ENCODE measurements at regions of chr18 and their contacts with region 1.

Region 1: DNA sequence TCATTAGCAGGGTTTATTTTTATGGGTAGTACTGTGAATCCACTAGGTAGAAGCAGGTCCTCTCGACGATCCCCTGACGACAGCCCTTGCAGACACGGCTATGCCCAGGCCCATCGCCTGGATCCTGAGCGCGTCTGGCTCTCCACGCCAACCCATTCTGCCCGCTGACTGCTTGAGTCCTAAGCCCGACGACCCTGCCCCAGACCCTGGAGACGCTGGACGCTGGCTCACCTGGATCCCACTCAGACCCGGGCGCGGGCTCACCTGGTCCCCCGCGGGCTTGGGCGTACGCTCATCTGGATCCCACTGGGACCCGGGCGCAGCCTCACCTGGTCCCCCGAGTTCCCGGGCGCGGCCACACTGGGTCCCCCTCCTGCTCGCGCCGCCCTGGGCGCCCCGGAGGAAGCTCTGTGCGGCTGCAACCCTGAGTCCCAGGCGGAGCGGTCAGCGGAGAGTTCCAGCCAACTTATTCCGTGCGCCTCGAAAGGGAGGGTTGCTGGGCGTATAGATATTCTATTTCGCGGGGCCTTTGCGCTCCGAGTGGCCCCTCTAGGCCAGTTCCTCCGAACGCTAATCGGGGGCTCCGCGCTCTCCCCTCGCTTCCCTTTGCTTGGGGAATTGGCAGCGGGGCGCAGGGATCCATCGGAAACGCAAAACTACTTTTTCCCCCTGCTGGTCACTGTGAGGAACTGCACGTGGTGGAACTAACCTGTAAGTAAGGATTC is 22.4 kb upstream of the RMP24 start:
- DNase-seq: peak; percentile 59
- ATAC-seq: peak; percentile 97
- H3K4me3 ChIP-seq: peak overlapping the region; percentile 58
- H3K27ac ChIP-seq: no peak overlapping the region
- H3K4me1 ChIP-seq: peaks cover 1% of the 10 kb centered on the region; the same call in 1 of the 2 replicates
- H3K27me3 ChIP-seq: peaks cover 13% of the 10 kb centered on the region
- CTCF ChIP-seq: peak; percentile 72
- POLR2A ChIP-seq: no peak
- RAD21 ChIP-seq: peak; percentile 58

Region 2: DNA sequence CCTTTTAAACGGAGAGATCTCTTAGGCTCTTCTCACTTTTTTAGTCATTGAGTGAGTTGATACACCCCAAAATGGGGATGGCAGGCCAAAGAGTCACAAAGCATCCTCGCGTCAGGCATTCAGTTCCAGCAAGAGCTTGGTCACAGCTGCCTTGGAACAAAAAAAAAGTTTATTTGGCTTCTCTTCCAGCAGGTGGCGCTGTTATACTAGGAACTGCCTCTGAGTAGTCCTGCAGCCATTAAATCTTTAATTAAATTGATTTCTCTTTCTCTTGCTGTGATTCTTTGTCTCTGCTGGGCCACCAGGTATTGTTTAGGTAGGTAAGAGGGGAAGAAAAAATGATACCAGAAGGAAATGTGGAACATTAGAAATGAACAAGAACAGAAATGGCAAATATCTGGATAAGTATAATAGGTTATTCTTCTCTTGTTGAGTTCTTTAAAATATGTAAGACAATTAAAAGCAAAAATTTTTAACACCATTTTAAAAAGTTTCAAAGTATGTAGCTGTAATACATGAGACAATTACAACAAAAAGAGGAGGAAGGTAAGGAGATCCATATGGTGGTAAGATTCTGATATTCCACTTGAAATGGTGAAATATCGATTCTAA is 193.5 kb before region 1 on chr18:
- CTCF ChIA-PET with region 1: interaction called, 3 read pairs
- POLR2A ChIA-PET with region 1: no interaction called
- dilution Hi-C with region 1: no loop called
- in situ Hi-C with region 1: loop called (anchors 10 kb)
- intact Hi-C with region 1: loop called (anchors 1 kb)
- DNase-seq: peak; percentile 59
- ATAC-seq: peak; percentile 84
- H3K4me3 ChIP-seq: no peak overlapping the region
- H3K27ac ChIP-seq: no peak overlapping the region
- H3K4me1 ChIP-seq: no peaks in the 10 kb centered on the region
- H3K27me3 ChIP-seq: peaks cover 32% of the 10 kb centered on the region
- CTCF ChIP-seq: peak; percentile 85
- POLR2A ChIP-seq: peak; percentile 35; the same call in 1 of the 2 replicates
- RAD21 ChIP-seq: peak; percentile 87

Region 3: DNA sequence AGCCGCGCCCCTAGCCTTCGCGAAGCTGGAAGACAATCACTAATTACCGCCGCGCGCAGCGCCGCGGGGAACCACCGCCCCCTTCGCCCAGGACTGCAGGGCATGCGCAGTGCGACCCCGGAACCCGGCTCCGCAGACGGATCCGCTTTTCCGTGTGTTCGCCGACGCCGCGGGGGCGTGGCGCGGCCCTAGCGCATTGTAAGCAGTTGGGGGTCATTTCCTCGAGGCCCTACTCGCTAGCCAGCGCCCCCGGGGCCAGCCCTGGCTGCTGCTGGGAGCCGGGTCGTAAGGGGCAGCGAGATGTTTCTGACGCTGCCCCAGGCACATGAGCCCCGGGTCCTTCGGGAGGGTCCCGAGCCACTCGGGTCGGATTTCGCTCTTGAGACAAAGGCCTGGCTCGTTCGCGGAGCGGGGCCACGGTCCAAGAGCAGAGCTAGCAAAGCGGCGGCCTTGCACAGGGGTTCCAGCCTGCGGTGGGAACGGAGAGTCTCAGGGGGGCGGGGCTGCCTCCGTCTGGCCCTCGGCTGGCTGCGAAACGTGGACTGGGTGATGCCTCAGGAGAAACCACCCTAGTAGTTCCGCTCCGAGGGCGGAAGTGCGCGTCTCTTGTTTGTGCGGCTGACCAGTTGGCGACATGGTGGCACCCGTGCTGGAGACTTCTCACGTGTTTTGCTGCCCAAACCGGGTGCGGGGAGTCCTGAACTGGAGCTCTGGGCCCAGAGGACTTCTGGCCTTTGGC is 179.4 kb after region 1 on chr18 and contains the starts of genes ELP2 and SLC39A6:
- CTCF ChIA-PET with region 1: no interaction called
- POLR2A ChIA-PET with region 1: no interaction called
- dilution Hi-C with region 1: no loop called
- in situ Hi-C with region 1: no loop called
- intact Hi-C with region 1: no loop called
- DNase-seq: peak; percentile 93
- ATAC-seq: peak; percentile 91
- H3K4me3 ChIP-seq: peak within 1 kb of the TSS; percentile 89
- H3K27ac ChIP-seq: peak within 1 kb of the TSS; percentile 89
- H3K4me1 ChIP-seq: peaks cover 8% of the 10 kb centered on the region
- H3K27me3 ChIP-seq: no peaks in the 10 kb centered on the region
- CTCF ChIP-seq: 0 out of 2 replicates have a peak, but pooled peaks have one; percentile 1
- POLR2A ChIP-seq: peak; percentile 69
- RAD21 ChIP-seq: no peak; the same call in 1 of the 2 replicates
- total RNA-seq, gene ELP2: 97.2 and 161 TPM in 2 replicates
- total RNA-seq, gene SLC39A6: 86.1 and 91.9 TPM in 2 replicates